ENCODE measurements at regions of chr10 and their contacts with region 1.

Region 1: GRCh38 chr10:24724381-24725228 is 918 bp upstream of the ARHGAP21 start:
- DNase-seq: peak; percentile 97
- H3K4me3 ChIP-seq: peak overlapping the region; percentile 50 to 95 (median 92)
- H3K27ac ChIP-seq: peak overlapping the region; percentile 78
- H3K4me1 ChIP-seq: peaks cover 26% of the 10 kb centered on the region
- H3K27me3 ChIP-seq: no peaks in the 10 kb centered on the region
- CTCF ChIP-seq: no peak
- POLR2A ChIP-seq: peak; percentile 94

Region 2: GRCh38 chr10:24680647-24681524 is 43.7 kb before region 1 on chr10:
- CTCF ChIA-PET with region 1: interaction called, 3 read pairs
- POLR2A ChIA-PET with region 1: no interaction called
- dilution Hi-C with region 1: no loop called
- intact Hi-C with region 1: loop called (anchors 2 kb)
- DNase-seq: peak; percentile 65
- H3K4me3 ChIP-seq: peak overlapping the region in 1 of 3 experiments; percentile 8
- H3K27ac ChIP-seq: peak overlapping the region; percentile 10
- H3K4me1 ChIP-seq: peaks cover 18% of the 10 kb centered on the region
- H3K27me3 ChIP-seq: no peaks in the 10 kb centered on the region
- CTCF ChIP-seq: no peak
- POLR2A ChIP-seq: no peak

Region 3: GRCh38 chr10:24851629-24852028 is 127.0 kb after region 1 on chr10:
- CTCF ChIA-PET with region 1: interaction called, 3 read pairs
- POLR2A ChIA-PET with region 1: no interaction called
- dilution Hi-C with region 1: no loop called
- intact Hi-C with region 1: loop called (anchors 1 kb)
- DNase-seq: peak; percentile 96
- H3K4me3 ChIP-seq: no peak overlapping the region
- H3K27ac ChIP-seq: peak overlapping the region; percentile 37
- H3K4me1 ChIP-seq: peaks cover 30% of the 10 kb centered on the region
- H3K27me3 ChIP-seq: no peaks in the 10 kb centered on the region
- CTCF ChIP-seq: no peak
- POLR2A ChIP-seq: no peak

Region 4: GRCh38 chr10:24952707-24953645 is 228.4 kb after region 1 on chr10:
- CTCF ChIA-PET with region 1: interaction called, 6 read pairs
- POLR2A ChIA-PET with region 1: interaction called, 7 read pairs
- dilution Hi-C with region 1: no loop called
- intact Hi-C with region 1: loop called (anchors 2 kb)
- DNase-seq: peak; percentile 31
- H3K4me3 ChIP-seq: peak overlapping the region; percentile 38 to 47 (median 44)
- H3K27ac ChIP-seq: peak overlapping the region; percentile 64
- H3K4me1 ChIP-seq: peaks cover 9% of the 10 kb centered on the region
- H3K27me3 ChIP-seq: no peaks in the 10 kb centered on the region
- CTCF ChIP-seq: peak in 1 of 2 donors; percentile 21
- POLR2A ChIP-seq: peak; percentile 18

Region 5: GRCh38 chr10:25016376-25017154 is 292.0 kb after region 1 on chr10 and contains the start of gene THNSL1:
- CTCF ChIA-PET with region 1: no interaction called
- POLR2A ChIA-PET with region 1: interaction called, 6 read pairs
- dilution Hi-C with region 1: no loop called
- intact Hi-C with region 1: loop called (anchors 1 kb)
- DNase-seq: peak; percentile 99
- H3K4me3 ChIP-seq: peak within 1 kb of the TSS; percentile 50 to 85 (median 62)
- H3K27ac ChIP-seq: peak within 1 kb of the TSS; percentile 88
- H3K4me1 ChIP-seq: peaks cover 17% of the 10 kb centered on the region
- H3K27me3 ChIP-seq: no peaks in the 10 kb centered on the region
- CTCF ChIP-seq: no peak
- POLR2A ChIP-seq: peak; percentile 83
- total RNA-seq, gene THNSL1: 1.9 and 2.1 TPM in 2 replicates